Activated B cell treated with CpG ODN at 0.5 μM for 24 hours (primary cell): ENCODE measurements at regions of chr22 and their contacts with region 1.

Region 1: DNA sequence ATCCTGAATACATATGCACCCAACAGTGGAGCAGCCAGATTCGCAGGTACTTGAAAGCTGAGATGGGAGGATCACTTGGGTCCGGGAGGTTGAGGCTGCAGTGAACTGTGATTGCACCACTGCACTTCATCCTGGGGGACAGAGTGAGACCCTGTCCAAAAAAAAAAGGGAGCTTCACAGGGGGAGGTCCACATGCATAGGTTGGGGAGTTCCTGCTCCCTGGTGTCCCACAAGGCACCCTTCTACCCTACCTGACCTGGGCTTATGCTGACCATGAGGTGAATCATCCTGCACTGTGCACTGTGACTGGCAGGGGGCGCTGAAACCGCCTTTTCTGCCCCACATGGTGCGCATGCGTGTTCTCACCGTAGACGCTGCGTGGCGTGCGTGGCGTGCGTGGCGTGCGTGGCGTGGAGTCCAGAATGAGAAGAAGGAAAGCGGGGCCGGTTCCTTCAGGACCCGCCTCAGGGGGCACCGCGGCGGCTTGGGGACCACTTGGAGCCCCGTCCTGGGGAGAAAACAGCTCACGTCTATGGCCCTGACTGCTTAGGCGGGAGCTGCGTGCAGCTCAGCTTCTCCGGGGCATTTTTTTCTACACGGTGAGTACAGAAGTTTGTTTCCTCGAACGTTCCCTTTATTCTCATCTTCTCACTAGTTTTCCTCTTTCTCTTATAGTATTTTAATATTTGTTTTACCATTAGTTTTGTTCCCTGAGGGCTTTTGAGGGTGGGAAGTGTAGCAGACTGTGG is 116.6 kb upstream of the GRK3 start:
- DNase-seq: peak; percentile 89
- ATAC-seq: peak; percentile 95
- H3K4me3 Mint-ChIP-seq: peak overlapping the region; percentile 94
- H3K27ac Mint-ChIP-seq: peak overlapping the region; percentile 89
- H3K4me1 Mint-ChIP-seq: peaks cover 44% of the 10 kb centered on the region
- H3K27me3 Mint-ChIP-seq: no peaks in the 10 kb centered on the region
- CTCF ChIP-seq: peak; percentile 42

Region 2: DNA sequence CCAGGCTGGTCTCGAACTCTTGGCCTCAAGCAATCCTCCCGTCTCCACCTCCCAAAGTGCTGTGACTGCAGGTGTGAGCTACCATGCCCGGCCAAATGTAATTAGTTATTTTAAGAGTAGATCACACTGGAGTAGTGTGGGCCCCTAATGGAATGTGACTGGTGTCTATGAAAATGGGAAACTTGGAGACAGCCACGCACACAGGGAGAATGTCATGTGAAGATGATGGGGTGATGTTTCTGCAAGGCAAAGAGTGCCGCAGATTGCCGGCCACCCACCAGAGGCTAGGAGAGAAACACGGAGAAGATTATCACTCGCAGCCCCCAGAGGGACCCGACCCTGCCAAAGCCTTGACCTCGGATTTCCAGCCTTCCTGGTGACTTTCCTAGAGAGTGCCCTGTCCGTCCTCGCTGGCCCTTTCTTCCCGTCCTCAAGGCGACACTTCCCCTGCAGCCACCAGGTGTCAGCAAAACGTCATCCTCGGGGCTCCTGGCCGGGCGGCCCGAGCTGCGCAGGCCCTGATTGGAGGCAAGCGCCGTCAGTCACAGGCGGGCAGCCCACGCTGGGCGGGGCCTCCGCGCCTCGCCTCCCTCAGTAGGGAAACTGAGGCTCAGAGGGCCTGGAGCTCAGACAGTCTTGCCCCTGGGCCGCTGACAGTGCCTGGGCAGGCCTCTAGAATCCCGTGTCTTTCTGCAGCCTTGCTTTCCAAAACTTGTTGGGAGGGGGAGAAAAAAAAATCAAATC is 212.1 kb before region 1 on chr22:
- CTCF ChIA-PET with region 1: no interaction called
- POLR2A ChIA-PET with region 1: no interaction called
- intact Hi-C with region 1: loop called (anchors 2 kb)
- DNase-seq: peak; percentile 56
- ATAC-seq: peak; percentile 89
- H3K4me3 Mint-ChIP-seq: no peak overlapping the region
- H3K27ac Mint-ChIP-seq: no peak overlapping the region
- H3K4me1 Mint-ChIP-seq: peaks cover 6% of the 10 kb centered on the region
- H3K27me3 Mint-ChIP-seq: peaks cover 29% of the 10 kb centered on the region
- CTCF ChIP-seq: no peak

Region 3: DNA sequence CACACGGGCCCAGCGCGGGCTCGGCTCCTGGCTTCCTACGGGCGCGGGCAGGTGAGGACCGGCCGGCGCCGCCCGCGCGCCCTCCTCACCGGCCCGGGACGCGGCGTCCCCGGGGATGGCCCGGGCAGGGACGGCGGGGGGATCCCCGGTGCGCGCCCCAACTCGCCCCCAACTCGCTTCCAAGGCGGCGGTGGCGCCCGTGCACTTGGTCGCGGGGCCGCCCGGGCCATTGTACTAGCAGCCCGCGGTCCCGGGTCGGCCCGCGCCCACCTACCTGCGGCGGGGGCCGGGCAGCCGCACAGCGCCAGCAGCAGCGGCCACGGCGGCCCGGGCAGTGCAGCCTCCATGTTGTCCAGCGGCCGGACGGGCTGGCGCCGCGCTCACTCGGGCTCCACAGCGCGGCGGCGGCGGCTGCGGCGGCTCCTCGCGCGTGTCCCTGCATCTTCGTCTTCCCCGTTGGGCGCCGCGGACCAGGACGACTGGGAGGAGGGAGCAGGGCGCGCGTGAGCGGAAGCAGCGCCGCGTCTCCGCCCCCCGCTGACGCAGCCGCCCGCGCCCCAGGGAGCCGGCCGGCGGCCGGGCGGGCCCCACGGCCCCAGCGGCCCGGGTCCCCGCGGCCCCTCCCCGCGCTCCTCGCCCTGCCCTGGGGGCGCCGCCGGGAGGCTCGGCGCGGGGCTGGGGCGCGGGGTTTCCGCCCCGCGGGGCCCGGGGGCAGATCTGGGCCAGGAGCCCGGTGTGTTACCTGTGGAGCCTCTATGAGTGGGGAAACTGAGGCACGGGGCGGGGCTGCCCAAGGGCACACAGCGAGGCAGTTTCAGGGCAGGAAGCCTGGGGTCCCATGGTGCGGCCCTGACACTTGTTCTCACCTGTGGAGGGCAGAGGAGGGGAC is 42.7 kb before region 1 on chr22:
- CTCF ChIA-PET with region 1: interaction called, 3 read pairs
- POLR2A ChIA-PET with region 1: no interaction called
- intact Hi-C with region 1: loop called (anchors 2 kb)
- DNase-seq: peak; percentile 73
- ATAC-seq: peak; percentile 87
- H3K4me3 Mint-ChIP-seq: peak overlapping the region; percentile 73
- H3K27ac Mint-ChIP-seq: no peak overlapping the region
- H3K4me1 Mint-ChIP-seq: peaks cover 43% of the 10 kb centered on the region
- H3K27me3 Mint-ChIP-seq: no peaks in the 10 kb centered on the region
- CTCF ChIP-seq: no peak

Region 4: GRCh38 chr22:25772288-25772687 is 324.4 kb after region 1 on chr22:
- CTCF ChIA-PET with region 1: interaction called, 12 read pairs
- POLR2A ChIA-PET with region 1: no interaction called
- intact Hi-C with region 1: loop called (anchors 5 kb)
- DNase-seq: no peak
- ATAC-seq: no peak
- H3K4me3 Mint-ChIP-seq: no peak overlapping the region
- H3K27ac Mint-ChIP-seq: no peak overlapping the region
- H3K4me1 Mint-ChIP-seq: peaks cover 12% of the 10 kb centered on the region
- H3K27me3 Mint-ChIP-seq: peaks cover 2% of the 10 kb centered on the region
- CTCF ChIP-seq: no peak

Region 5: GRCh38 chr22:26364066-26365015 is 916.5 kb after region 1 on chr22:
- CTCF ChIA-PET with region 1: no interaction called
- POLR2A ChIA-PET with region 1: no interaction called
- intact Hi-C with region 1: loop called (anchors 10 kb)
- DNase-seq: no peak
- ATAC-seq: peak; percentile 81
- H3K4me3 Mint-ChIP-seq: no peak overlapping the region
- H3K27ac Mint-ChIP-seq: no peak overlapping the region
- H3K4me1 Mint-ChIP-seq: peaks cover 7% of the 10 kb centered on the region
- H3K27me3 Mint-ChIP-seq: peaks cover 17% of the 10 kb centered on the region
- CTCF ChIP-seq: no peak